ENCODE measurements at regions of chr4 and their contacts with region 1.

Region 1: GRCh38 chr4:79083406-79084010 is 144.3 kb upstream of the PAQR3 start:
- DNase-seq: no peak
- ATAC-seq: peak; percentile 94

Region 2: DNA sequence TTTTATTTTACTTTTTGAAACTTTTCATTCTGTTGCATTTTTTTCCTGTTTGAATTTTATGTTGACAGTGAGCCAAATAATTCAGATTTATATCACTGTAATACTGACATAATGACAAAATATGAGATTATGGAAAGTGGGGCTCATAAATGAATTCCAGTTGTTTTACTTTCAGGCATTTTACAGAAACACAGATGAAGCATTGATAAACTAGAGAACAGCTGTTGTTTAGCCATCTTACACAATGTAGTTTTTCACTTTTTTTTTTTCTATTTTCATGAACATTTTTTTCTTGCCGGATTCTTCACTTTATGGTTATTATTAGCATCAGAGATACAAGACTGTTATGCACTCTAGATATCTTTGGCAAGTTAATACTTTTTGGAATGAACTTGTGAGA is 52.5 kb before region 1 on chr4:
- intact Hi-C with region 1: no loop called
- DNase-seq: no peak
- ATAC-seq: no peak

Region 3: DNA sequence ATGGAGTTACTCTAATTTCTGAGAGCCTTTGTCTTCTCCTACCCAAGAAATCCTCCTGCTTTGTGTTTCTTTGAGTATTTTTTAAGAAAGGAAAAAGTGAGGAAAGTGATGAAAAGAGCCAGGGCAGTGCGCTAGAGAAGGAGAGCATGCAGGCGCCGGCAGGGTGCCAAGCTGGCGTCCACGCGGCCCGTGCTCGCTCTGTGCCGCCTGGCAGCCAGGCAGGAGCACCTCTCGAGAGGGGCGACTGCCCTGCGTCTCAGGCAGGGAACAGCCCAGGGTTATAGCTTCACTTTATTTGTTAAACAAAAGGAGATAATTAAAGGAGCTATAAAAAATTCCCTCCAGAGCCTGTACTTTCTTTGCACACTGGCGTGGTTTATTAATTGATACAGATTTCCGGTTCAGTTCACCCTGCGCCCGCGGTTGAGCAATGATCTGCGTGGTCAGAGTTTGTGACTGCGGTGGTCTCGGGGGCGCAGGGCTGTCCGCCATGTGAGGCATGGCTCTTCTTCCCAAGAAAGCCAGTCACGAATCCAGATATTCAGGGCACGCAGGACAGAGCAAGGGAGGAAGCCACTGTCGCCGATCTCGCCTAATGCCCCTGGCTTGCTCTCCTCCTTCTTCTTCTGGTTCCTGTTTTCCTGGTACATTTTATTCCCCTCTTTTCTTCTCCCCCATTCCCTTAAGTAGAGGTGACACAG is 33.5 kb before region 1 on chr4:
- intact Hi-C with region 1: loop called (anchors 5 kb)
- DNase-seq: no peak
- ATAC-seq: no peak

Region 4: DNA sequence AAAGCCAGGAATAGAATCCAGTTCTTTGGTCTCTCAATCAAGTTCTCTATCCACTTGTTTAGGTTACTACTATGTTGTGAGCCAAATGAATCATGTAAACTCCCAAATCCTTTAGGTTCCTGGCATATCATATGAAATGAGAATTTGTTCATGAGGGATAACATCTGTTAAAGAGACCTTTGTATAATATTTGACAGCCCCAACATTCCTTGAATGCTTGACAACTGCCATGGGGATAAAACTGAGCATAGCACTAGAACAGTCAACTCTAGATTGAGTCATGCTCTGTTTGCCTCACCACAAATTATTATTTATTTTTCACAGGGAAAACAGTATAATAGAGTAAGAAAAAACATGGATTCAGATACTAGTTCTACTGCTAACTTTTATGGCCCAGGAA is 149.0 kb after region 1 on chr4:
- intact Hi-C with region 1: no loop called
- DNase-seq: no peak
- ATAC-seq: no peak

Measured in Right ventricle myocardium inferior (tissue), 1 donor.